IMR-90 (cell line): ENCODE measurements at regions of chr6 and their contacts with region 1.

Region 1: GRCh38 chr6:111210194-111210728 is 123.0 kb downstream of the SLC16A10 start:
- DNase-seq: peak; percentile 57
- ATAC-seq: peak; percentile 95
- H3K4me3 ChIP-seq: no peak overlapping the region
- H3K27ac ChIP-seq: no peak overlapping the region
- H3K4me1 ChIP-seq: no peaks in the 10 kb centered on the region
- H3K27me3 ChIP-seq: no peaks in the 10 kb centered on the region; the same call in none of the 2 replicates
- CTCF ChIP-seq: peak; percentile 79
- POLR2A ChIP-seq: no peak
- RAD21 ChIP-seq: peak; percentile 74

Region 2: GRCh38 chr6:111011360-111012142 is 198.7 kb before region 1 on chr6:
- CTCF ChIA-PET with region 1: interaction called, 4 read pairs
- POLR2A ChIA-PET with region 1: no interaction called
- dilution Hi-C with region 1: no loop called
- in situ Hi-C with region 1: no loop called
- intact Hi-C with region 1: loop called (anchors 1 kb)
- DNase-seq: peak; percentile 55
- ATAC-seq: peak; percentile 80
- H3K4me3 ChIP-seq: no peak overlapping the region
- H3K27ac ChIP-seq: no peak overlapping the region
- H3K4me1 ChIP-seq: no peaks in the 10 kb centered on the region; the same call in 1 of the 2 replicates
- H3K27me3 ChIP-seq: no peaks in the 10 kb centered on the region
- CTCF ChIP-seq: peak; percentile 70
- POLR2A ChIP-seq: no peak
- RAD21 ChIP-seq: peak; percentile 73

Region 3: GRCh38 chr6:111057074-111057752 is 153.0 kb before region 1 on chr6:
- CTCF ChIA-PET with region 1: interaction called, 8 read pairs
- POLR2A ChIA-PET with region 1: no interaction called
- dilution Hi-C with region 1: no loop called
- in situ Hi-C with region 1: loop called (anchors 5 kb)
- intact Hi-C with region 1: loop called (anchors 1 kb)
- DNase-seq: peak; percentile 52
- ATAC-seq: peak; percentile 94
- H3K4me3 ChIP-seq: no peak overlapping the region
- H3K27ac ChIP-seq: no peak overlapping the region
- H3K4me1 ChIP-seq: no peaks in the 10 kb centered on the region
- H3K27me3 ChIP-seq: peaks cover 18% of the 10 kb centered on the region
- CTCF ChIP-seq: peak; percentile 73
- POLR2A ChIP-seq: no peak
- RAD21 ChIP-seq: peak; percentile 57